ENCODE measurements at regions of chrX and their contacts with region 1.

Region 1: GRCh38 chrX:40539214-40540142 is 41.3 kb upstream of the ATP6AP2 start:
- DNase-seq: peak in 6 of 7 donors; percentile 26 to 67 (median 48)
- H3K4me3 ChIP-seq: no peak overlapping the region
- H3K27ac ChIP-seq: peak overlapping the region in 1 of 5 donors; percentile 31
- H3K4me1 ChIP-seq: peaks cover 0 to 4% of the 10 kb centered on the region in 2 donors
- H3K27me3 ChIP-seq: peaks cover 12% of the 10 kb centered on the region
- CTCF ChIP-seq: no peak
- POLR2A ChIP-seq: no peak

Region 2: GRCh38 chrX:40647307-40648197 is 108.1 kb after region 1 on chrX and contains the start of gene CXorf38:
- intact Hi-C with region 1: loop called in 1 of 2 experiments (anchors 10 kb)
- DNase-seq: peak; percentile 91 to 96 (median 95)
- H3K4me3 ChIP-seq: peak within 1 kb of the TSS in 3 of 4 donors; percentile 42 to 95 (median 77)
- H3K27ac ChIP-seq: peak within 1 kb of the TSS; percentile 46 to 87 (median 71)
- H3K4me1 ChIP-seq: peaks cover 8 to 39% of the 10 kb centered on the region in 2 donors
- H3K27me3 ChIP-seq: no peaks in the 10 kb centered on the region
- CTCF ChIP-seq: no peak
- POLR2A ChIP-seq: peak; percentile 20 to 63
- total RNA-seq, gene CXorf38: 14.5 to 23.8 (median 19.5) TPM

Region 3: GRCh38 chrX:40749681-40750494 is 210.4 kb after region 1 on chrX:
- intact Hi-C with region 1: no loop called
- DNase-seq: no peak
- H3K4me3 ChIP-seq: no peak overlapping the region
- H3K27ac ChIP-seq: peak overlapping the region in 1 of 5 donors; percentile 15
- H3K4me1 ChIP-seq: no peaks in the 10 kb centered on the region
- H3K27me3 ChIP-seq: peaks cover 10% of the 10 kb centered on the region
- CTCF ChIP-seq: no peak
- POLR2A ChIP-seq: no peak